Adrenal gland (tissue), 19 donors: ENCODE measurements at regions of chr10 and their contacts with region 1.

Region 1: DNA sequence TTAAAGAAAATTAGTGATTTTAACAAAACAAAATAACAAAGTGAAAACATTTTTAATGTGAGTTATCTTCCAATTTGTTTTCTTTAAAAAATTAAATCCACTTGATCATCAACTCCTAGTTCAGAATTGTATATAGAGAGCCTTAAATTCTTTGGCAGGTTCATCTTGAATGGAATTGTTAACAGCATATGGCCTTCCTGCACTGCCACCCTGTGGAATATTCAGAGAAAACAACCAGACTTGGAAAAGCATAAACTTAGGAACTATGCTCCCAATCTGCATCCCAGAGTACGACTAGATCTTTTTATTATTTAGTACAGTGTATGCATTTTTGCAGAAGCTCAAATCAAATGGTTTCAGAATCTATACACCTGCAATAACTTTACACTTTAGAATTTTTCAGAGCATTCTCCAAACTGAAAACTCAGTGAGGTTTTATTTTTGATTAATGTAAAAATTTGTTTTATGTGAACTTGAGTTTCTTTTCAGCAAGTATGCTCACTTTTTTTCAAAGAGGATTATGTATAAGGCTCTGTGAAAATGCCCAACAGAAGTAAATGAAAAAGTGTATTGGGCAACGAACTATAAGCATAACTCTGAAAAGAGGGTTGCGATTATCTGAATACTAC is 44.9 kb upstream of the ANK3 start:
- DNase-seq: peak; percentile 15 to 64 (median 35)
- H3K4me3 ChIP-seq: no peak overlapping the region
- H3K27ac ChIP-seq: no peak overlapping the region
- H3K4me1 ChIP-seq: peaks cover 0 to 7% of the 10 kb centered on the region in 2 donors
- H3K27me3 ChIP-seq: no peaks in the 10 kb centered on the region
- CTCF ChIP-seq: peak; percentile 39 to 78 (median 68)
- POLR2A ChIP-seq: no peak

Region 2: DNA sequence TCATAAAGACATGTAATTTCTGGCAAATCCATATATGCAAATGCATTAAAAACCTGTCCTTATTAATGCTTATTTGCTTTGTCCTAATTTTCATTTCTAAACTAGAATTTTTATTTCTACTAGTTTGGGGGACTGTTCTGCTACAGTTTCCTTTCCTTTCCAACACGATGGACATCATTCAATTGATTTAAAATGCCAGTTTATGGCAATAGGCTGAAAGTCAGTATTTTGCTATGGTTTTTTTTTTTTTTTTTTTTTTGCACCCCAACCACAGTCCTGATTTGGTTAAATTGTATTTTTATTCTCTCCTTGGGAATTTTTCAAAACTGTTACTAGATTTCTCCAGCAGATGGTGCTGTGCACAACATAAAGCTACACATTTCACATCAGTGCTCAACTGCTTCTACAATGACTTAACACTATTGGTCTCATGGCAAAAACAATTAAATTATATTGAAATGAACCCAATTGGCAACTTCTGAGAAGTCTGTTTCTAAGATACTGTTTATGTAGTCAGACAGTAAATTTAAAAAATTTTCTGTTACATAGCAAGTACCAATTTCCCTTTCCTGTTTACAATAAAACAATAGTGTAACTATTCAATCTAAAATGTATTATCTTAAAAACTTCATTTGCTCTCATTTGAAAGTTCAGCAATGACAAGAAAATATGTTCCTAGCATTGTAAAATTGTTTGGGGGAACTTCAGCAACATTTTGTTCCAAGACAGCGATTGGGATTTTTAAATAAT is 334.4 kb before region 1 on chr10:
- intact Hi-C with region 1: loop called in 1 of 2 experiments (anchors 10 kb)
- DNase-seq: peak in 1 of 7 donors; percentile 11
- H3K4me3 ChIP-seq: no peak overlapping the region
- H3K27ac ChIP-seq: no peak overlapping the region
- H3K4me1 ChIP-seq: no peaks in the 10 kb centered on the region
- H3K27me3 ChIP-seq: no peaks in the 10 kb centered on the region
- CTCF ChIP-seq: peak; percentile 42 to 70 (median 62)
- POLR2A ChIP-seq: no peak

Region 3: DNA sequence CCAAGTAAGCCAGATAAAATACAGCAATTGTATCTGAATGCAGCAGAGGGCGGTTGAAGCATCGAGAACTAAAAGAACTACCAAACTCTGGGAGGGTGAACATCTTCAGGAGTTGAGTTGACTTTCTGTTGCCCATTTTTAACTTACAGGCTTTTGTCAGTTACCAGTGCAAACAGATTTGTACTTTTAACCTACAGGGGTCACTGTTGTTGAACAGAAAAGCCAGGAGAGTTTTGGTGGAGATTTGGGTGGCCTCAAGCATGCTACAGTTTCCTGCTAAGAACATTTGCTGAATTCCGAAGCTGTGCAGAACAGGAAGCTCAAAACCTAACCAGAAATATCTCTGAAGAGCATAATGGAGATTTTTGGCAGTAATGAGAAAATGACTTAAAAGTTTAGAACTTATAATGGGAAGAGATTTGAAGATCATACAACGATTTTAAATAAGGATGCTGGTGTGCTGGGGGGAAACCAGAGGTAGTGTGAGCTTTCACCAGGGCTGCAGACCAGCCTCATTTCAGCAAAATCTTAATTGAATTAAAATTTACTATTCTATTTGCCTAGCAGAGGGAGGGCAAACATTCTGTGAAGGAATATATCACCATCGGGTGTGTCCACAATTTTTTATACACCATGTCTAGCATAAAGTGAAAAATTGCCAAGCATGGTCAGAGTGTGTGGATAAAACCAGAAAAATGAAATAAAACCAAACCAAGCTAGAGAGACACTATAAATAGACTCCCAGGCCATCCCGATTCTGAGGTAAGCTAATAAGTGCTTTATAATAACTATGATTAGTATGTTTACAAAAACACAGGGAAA is 319.6 kb before region 1 on chr10:
- intact Hi-C with region 1: loop called in 1 of 2 experiments (anchors 10 kb)
- DNase-seq: peak in 1 of 7 donors; percentile 15
- H3K4me3 ChIP-seq: no peak overlapping the region
- H3K27ac ChIP-seq: no peak overlapping the region
- H3K4me1 ChIP-seq: no peaks in the 10 kb centered on the region
- H3K27me3 ChIP-seq: no peaks in the 10 kb centered on the region
- CTCF ChIP-seq: peak; percentile 29 to 58 (median 47)
- POLR2A ChIP-seq: no peak

Region 4: DNA sequence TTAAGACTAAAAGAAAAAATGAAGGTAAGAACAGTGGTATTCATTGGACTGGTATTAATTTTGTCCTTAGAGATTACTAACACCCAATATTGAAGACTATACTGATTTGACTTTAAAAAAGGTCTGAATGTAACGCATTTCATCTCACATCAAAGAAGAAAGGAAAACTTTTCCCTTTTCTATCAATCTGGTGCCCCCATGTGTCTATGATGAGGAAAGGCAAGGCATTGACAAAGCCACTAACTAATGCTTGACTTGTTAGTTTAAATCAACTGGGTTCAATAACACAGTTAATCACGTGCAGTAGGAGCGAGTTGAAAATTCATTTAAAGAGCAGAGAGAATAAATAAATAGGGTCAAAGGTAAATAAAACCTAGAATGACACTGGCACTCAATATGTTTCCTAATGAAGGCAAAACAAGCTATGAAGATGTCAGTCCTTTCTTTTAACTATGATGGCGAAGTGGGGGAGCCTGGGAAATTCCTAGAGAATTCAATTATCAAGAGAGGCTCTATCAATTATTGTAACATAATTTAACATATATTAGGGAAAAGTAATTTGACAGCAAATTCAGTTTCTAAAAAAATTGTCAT is 225.8 kb before region 1 on chr10:
- intact Hi-C with region 1: loop called in 1 of 2 experiments (anchors 10 kb)
- DNase-seq: no peak
- H3K4me3 ChIP-seq: no peak overlapping the region
- H3K27ac ChIP-seq: no peak overlapping the region
- H3K4me1 ChIP-seq: no peaks in the 10 kb centered on the region
- H3K27me3 ChIP-seq: no peaks in the 10 kb centered on the region
- CTCF ChIP-seq: peak; percentile 37 to 77 (median 69)
- POLR2A ChIP-seq: no peak

Region 5: DNA sequence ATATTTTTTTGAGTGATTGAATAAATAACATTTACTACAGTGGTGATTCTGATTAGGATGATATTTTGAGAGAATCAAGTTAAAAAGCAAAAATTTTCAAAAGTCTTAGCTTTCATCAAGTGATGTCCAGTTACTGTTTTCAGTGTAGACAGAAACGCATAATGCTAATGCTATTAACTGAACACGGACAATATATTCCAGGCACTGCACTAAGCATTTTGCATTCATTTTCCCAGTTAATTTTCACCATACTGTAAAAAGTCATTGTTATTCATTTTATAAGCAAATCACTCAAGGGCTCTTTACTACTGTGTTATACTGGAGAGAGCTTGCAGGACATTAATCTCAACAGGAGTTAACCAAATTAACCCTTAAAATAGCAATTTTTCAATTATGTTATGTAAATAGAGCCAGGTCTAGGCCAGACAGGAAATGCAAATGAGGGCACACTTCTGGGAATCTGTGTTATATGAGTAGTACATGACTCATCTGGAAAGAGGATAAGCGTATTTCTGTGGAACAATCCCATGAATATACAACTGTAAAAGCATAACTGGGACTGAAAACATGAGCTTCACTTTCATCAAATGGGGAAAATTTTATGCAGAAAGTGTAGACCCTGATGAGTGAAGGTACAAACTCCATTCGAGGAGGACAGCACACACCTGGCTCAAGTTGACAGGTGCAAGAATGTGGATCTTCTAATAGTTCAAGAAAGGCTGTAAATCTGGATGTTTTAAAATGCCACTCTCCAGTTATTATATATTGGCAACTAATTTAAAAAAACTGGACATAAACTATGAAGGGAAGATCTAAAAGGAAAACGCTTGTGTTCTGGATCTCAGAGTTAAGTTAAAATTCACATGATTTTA is 120.2 kb before region 1 on chr10:
- intact Hi-C with region 1: loop called in 1 of 2 experiments (anchors 5 kb)
- DNase-seq: no peak
- H3K4me3 ChIP-seq: no peak overlapping the region
- H3K27ac ChIP-seq: no peak overlapping the region
- H3K4me1 ChIP-seq: peaks cover 0 to 16% of the 10 kb centered on the region in 2 donors
- H3K27me3 ChIP-seq: no peaks in the 10 kb centered on the region
- CTCF ChIP-seq: no peak
- POLR2A ChIP-seq: no peak

Region 6: GRCh38 chr10:60480865-60481563 is 46.5 kb after region 1 on chr10:
- intact Hi-C with region 1: no loop called
- DNase-seq: peak; percentile 35 to 73 (median 64)
- H3K4me3 ChIP-seq: no peak overlapping the region
- H3K27ac ChIP-seq: no peak overlapping the region
- H3K4me1 ChIP-seq: no peaks in the 10 kb centered on the region
- H3K27me3 ChIP-seq: no peaks in the 10 kb centered on the region
- CTCF ChIP-seq: no peak
- POLR2A ChIP-seq: no peak

Region 7: GRCh38 chr10:60896033-60896432 is 461.5 kb after region 1 on chr10:
- intact Hi-C with region 1: no loop called
- DNase-seq: no peak
- H3K4me3 ChIP-seq: no peak overlapping the region
- H3K27ac ChIP-seq: peak overlapping the region in 3 of 5 donors; percentile 36 to 53 (median 49)
- H3K4me1 ChIP-seq: peaks cover 19 to 22% of the 10 kb centered on the region in 2 donors
- H3K27me3 ChIP-seq: no peaks in the 10 kb centered on the region
- CTCF ChIP-seq: no peak
- POLR2A ChIP-seq: no peak

Region 8: GRCh38 chr10:62130948-62131347 is 1696.4 kb after region 1 on chr10:
- intact Hi-C with region 1: no loop called
- DNase-seq: peak in 2 of 7 donors; percentile 7 to 22
- H3K4me3 ChIP-seq: no peak overlapping the region
- H3K27ac ChIP-seq: no peak overlapping the region
- H3K4me1 ChIP-seq: no peaks in the 10 kb centered on the region
- H3K27me3 ChIP-seq: no peaks in the 10 kb centered on the region
- CTCF ChIP-seq: no peak
- POLR2A ChIP-seq: no peak